ENCODE measurements at regions of chr4 and their contacts with region 1.

Region 1: DNA sequence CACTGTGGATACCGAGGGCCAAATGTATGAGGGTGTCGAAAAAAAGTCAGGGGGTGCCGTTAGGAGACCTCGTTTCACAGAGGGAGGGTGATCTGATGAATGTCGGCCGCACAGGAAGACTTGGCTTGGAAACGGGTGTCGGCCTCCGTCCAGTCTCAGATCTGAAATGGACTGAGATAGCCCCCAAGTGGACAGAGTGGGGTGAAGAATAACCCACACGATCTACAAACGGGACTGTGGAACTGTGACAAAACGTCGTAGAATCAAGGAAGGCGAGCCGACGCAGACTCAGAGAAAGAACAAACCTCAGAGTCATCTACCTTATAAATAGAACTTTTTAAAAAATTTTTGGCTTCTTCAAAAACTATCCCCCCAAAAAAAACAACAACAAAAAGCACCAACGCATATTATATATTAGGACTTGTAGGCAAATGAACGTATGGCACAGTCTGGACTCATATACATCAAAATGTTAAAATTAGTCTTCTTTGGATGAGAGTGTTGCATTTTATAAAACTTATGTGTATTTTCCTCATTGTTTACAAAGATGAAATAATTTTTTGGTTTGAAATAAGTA is 63.8 kb upstream of the IRF2 start:
- DNase-seq: peak; percentile 76
- CTCF ChIP-seq: peak; percentile 45

Region 2: GRCh38 chr4:184263910-184264732 is 274.0 kb before region 1 on chr4:
- in situ Hi-C with region 1: loop called (anchors 10 kb)
- DNase-seq: peak; percentile 72
- CTCF ChIP-seq: peak; percentile 68

Region 3: GRCh38 chr4:184417802-184418511 is 120.2 kb before region 1 on chr4:
- in situ Hi-C with region 1: loop called (anchors 25 kb)
- DNase-seq: peak; percentile 59
- CTCF ChIP-seq: no peak

Region 4: GRCh38 chr4:184474263-184475095 is 63.6 kb before region 1 on chr4 and contains the start of gene IRF2:
- in situ Hi-C with region 1: loop called (anchors 10 kb)
- DNase-seq: peak; percentile 98
- CTCF ChIP-seq: peak; percentile 3

Region 5: DNA sequence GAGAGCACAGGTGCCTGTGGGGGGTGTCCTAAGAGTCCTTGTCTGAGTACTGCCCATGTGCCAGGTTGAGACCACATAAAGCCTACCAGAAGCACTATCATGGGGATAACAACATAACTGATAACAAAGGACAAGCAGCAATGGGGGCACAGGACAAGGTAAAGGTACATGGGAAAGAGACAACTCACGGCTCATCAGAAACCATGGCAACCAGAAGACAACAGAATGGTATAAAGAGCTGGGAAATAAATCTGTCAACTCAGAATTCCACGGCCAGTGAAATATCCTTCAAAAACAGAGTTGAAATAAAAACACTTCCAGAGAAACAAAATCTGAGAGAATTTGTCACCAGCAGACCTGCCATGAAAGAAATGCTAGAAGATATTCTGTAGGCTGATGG is 175.8 kb after region 1 on chr4:
- in situ Hi-C with region 1: no loop called
- DNase-seq: no peak
- CTCF ChIP-seq: no peak

Region 6: DNA sequence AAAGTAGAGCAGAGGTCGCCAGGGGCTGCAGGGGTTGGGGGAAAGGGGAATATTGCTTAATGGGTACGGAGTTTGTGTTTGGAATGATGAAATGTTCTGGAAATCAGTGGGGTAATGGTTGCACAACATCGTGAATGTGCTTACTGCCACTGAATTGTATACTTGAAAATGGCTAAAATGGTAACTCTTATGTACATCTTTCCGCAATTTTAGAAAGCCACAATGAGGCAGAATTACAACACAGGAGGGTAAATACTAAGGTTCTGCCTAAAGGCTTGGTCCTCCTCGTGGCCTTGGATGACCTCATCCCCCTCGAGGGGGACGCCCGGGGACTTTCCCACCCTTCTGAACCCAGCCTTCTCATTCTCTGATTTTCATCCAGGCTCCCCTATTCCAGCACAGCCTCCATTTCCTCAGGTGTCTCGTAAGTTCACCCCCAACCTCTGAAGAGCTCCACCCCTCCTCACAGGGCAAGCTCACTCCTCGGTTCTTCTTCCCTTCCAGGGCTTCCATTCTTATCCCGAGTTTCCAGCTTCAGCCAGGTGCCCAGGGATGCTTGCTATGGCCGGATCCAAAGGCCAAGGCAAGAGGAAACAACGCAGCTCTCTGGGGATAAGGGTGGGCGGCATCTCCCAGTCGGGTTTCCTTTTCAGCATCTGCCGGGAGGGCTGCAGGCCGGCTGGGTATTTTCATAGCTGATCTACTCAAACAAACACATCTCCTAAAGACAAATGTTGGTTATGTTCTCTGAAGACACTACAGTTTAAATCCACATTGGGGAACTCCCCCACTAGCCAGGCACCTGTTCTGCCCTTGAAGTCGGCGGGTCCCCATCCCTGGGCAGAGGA is 359.0 kb after region 1 on chr4:
- in situ Hi-C with region 1: no loop called
- DNase-seq: peak; percentile 71
- CTCF ChIP-seq: no peak